OCI-LY7 (cell line): ENCODE measurements at regions of chr17 and their contacts with region 1.

Region 1: DNA sequence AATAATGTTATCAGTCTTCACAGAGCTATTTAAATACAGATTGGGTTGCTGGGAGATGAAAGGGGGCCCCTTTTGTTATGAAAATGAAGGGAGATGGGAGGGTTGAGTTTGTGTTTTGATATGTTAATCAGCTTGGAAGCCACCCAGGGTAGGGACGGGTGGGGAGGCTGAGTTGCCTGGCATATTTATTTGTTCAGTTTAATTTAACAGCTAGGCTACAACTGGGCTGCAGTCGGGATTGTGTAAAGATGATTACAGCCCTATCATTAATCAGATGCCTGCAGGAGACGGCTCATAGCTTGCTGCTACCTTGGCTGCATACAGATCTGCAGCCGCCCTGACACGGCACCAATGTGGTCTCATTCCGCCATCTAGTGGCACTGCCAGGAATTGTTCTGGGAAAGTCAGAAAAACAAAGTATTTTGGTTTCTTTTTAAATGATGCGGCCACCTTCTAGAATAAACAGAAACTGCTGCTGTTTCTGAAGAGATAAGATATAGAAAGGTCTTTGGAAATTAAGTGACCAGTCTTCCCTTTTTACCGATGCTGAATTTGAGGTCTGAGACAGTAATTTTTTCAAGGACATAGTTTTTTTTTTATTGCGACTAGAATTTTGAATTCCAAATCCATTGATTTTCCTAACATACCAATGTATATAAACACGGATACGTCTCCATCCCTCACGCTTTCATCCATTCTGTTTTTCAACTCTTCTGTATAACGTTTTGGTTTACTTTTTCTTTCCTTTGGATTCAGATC is 458.0 kb upstream of the ASIC2 start:
- DNase-seq: peak; percentile 60
- H3K4me3 ChIP-seq: peak overlapping the region; percentile 30
- H3K27ac ChIP-seq: no peak overlapping the region
- H3K4me1 ChIP-seq: peaks cover 3% of the 10 kb centered on the region
- CTCF ChIP-seq: peak; percentile 87

Region 2: DNA sequence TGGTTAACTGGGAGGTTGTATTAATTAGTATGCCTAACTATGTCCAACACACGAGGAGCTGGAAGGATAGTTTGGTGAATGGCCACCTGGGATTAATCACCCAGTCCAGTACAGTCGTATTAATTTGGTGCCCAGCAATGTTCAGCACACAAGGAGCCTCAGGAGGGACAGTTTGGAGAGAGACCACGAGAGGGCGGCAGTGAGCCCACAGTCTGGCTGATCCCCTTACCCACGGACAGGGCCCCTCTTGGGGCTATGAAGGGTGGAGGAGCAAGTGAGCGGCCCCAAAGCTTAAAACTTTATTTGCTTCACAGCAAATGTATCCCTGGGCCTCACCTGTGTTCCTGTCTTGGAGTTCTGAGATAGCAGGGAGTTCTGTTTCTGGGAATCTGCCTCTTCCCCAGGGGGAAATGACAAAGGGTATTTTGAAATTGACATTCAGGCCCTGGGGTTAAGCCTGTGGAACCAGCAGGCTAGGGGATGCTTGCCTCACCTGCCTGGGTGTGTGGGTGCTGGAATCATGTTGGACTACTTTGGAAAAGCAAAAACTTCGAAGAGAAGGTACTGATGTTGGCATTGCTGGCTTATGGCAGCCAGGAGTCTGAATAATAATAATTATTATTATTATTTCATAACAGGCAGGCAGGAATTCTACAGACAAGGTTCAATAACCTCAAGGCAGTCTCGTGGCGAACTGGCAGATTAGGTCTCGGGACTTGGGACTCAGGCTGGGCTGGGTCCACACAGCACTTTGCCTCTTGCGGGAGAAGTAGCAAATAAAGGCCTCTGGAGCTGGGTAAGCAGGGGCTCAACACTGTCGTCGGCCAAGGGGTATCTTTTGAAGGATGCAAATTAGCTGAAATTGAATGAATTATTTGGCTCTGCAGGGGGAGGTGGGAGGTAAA is 230.4 kb before region 1 on chr17:
- CTCF ChIA-PET with region 1: no interaction called
- POLR2A ChIA-PET with region 1: no interaction called
- intact Hi-C with region 1: loop called (anchors 2 kb)
- DNase-seq: peak; percentile 37
- H3K4me3 ChIP-seq: no peak overlapping the region
- H3K27ac ChIP-seq: no peak overlapping the region
- H3K4me1 ChIP-seq: no peaks in the 10 kb centered on the region
- CTCF ChIP-seq: peak; percentile 89

Region 3: DNA sequence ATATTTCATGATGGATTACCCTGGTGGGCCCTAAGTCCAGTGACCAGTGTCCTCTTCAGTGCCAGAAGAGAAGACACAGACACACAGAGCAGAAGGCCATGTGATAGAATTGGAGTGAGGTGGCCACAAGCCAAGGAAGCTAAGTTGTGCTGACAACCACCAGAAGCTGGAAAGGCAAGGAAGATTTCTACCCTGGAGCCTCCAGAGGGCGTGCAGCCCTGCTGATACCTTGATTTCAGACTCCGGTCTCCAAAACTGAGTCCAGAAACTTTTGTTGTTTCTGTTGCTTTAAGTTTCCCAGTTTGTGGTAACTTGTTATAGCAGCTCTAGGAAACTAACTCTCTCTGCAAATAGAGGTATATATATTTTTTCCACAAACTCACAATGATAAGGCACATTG is 61.4 kb before region 1 on chr17:
- CTCF ChIA-PET with region 1: no interaction called
- POLR2A ChIA-PET with region 1: no interaction called
- intact Hi-C with region 1: loop called (anchors 5 kb)
- DNase-seq: no peak
- H3K4me3 ChIP-seq: no peak overlapping the region
- H3K27ac ChIP-seq: no peak overlapping the region
- H3K4me1 ChIP-seq: no peaks in the 10 kb centered on the region
- CTCF ChIP-seq: peak; percentile 57

Region 4: GRCh38 chr17:33725675-33726271 is 25.3 kb before region 1 on chr17:
- CTCF ChIA-PET with region 1: no interaction called
- POLR2A ChIA-PET with region 1: no interaction called
- intact Hi-C with region 1: loop called (anchors 2 kb)
- DNase-seq: peak; percentile 29
- H3K4me3 ChIP-seq: no peak overlapping the region
- H3K27ac ChIP-seq: no peak overlapping the region
- H3K4me1 ChIP-seq: no peaks in the 10 kb centered on the region
- CTCF ChIP-seq: peak; percentile 84

Region 5: GRCh38 chr17:34012709-34013375 is 261.7 kb after region 1 on chr17:
- CTCF ChIA-PET with region 1: no interaction called
- POLR2A ChIA-PET with region 1: no interaction called
- intact Hi-C with region 1: no loop called
- DNase-seq: no peak
- H3K4me3 ChIP-seq: no peak overlapping the region
- H3K27ac ChIP-seq: no peak overlapping the region
- H3K4me1 ChIP-seq: no peaks in the 10 kb centered on the region
- CTCF ChIP-seq: no peak